OCI-LY7 (cell line): ENCODE measurements at regions of chr12 and their contacts with region 1.

Region 1: GRCh38 chr12:94074980-94075928 is 73.1 kb upstream of the PLXNC1 start:
- DNase-seq: peak; percentile 8
- H3K4me3 ChIP-seq: no peak overlapping the region
- H3K27ac ChIP-seq: no peak overlapping the region
- H3K4me1 ChIP-seq: no peaks in the 10 kb centered on the region
- CTCF ChIP-seq: peak; percentile 63

Region 2: DNA sequence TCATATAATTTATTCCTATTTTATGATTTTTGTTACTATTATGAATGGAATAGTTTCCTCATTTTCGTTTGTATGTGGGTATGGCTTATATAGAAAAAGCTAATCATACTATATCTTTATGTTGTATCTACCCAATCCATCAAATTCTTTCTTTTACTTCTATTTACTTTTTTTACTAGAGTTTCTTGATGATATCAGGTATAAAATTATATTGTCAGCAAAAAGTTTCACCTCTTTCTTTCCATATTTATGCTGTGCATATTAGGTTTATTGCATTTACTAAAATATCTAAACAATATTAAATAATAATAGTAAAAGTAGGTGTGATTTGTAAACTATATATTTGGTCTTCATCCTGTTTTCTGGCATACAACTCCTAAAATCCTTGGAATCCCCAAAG is 73.6 kb before region 1 on chr12:
- CTCF ChIA-PET with region 1: no interaction called
- POLR2A ChIA-PET with region 1: no interaction called
- intact Hi-C with region 1: no loop called
- DNase-seq: no peak
- H3K4me3 ChIP-seq: no peak overlapping the region
- H3K27ac ChIP-seq: no peak overlapping the region
- H3K4me1 ChIP-seq: no peaks in the 10 kb centered on the region
- CTCF ChIP-seq: no peak

Region 3: GRCh38 chr12:94092516-94093241 is 17.4 kb after region 1 on chr12:
- CTCF ChIA-PET with region 1: no interaction called
- POLR2A ChIA-PET with region 1: interaction called, 11 read pairs
- intact Hi-C with region 1: no loop called
- DNase-seq: no peak
- H3K4me3 ChIP-seq: no peak overlapping the region
- H3K27ac ChIP-seq: no peak overlapping the region
- H3K4me1 ChIP-seq: no peaks in the 10 kb centered on the region
- CTCF ChIP-seq: no peak